Head of caudate nucleus (tissue), 42 donors: ENCODE measurements at regions of chr12 and their contacts with region 1.

Region 1: GRCh38 chr12:108562348-108563135 is at the start of gene ISCU:
- DNase-seq: peak; percentile 91 to 100 (median 98)

Region 2: GRCh38 chr12:108514973-108515814 is 47.3 kb before region 1 on chr12 and contains the start of gene FICD:
- intact Hi-C with region 1: loop called (anchors 5 kb)
- DNase-seq: peak; percentile 100

Region 3: DNA sequence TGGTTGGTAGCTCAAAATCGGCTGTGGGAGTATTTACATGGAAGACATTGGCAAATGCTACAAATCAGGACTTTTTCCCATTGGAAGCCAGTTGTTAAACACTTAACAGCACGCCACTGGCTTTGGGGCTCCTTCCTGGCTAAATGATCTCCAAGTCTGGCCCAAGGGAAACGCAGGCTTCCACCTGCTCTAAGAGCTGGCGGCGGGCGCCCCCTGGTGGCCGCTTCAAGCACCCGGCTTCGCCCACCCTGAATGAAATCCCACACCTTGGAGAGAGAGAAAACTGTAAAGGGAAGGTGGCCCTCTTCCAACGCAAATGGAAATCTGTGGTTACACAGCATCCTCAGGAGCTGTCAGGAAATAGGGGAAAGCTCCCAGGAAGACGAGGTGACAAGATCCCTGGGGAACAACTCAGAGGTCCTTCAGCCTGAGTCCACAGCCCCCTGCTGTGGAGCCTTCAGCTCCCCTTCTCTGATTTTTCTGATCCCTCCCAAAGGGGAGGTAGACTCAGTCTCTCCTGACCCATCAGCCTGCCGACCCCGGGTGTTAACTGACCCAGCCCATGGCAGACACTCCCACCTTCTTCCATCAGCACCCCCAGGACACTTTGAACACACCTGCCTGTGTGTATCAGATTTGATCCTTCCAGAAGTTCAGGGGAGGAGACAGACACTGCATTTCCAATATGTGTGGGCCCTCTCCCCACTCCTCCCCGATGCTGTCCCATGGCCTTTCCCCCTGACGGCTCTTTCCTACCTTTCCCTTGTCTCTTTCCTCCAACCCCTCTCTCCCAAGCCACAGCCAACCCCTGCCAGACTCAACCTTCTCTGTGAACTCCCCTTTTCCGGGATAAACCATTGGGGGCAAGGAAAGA is 55.8 kb after region 1 on chr12:
- intact Hi-C with region 1: loop called (anchors 2 kb)
- DNase-seq: peak; percentile 63 to 92 (median 84)

Region 4: DNA sequence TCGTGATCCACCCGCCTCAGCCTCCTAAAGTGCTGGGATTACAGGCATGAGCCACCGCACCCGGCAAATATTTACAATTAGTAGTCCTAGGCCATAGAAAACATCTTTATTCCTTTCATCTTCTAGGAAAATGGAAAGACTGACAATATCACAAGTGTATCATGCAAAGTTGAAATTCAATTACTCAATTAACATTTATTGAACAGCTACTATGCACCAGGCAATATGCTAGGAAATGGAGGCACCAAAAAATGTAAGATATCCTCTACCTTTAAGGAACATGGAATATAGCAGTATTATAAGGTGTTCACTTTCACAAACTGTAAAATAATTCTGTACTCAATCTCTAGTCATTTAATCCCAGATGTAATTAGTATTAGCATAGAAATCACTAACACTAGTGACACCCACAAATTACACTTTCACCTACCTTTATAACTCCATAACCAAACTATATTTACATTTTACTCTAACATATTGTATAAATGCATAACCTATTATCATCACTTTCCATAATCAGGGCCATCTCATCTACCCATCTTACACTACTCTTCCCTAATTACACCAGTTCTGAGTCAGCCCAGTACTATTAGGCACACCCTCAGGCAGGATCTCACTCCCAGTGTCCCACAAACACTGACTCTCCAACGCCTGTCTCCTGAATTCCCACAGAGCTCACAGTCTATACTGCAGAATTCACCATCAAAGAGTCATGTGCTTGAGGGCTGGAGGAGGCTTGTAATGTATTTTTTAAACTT is 158.4 kb after region 1 on chr12:
- intact Hi-C with region 1: no loop called
- DNase-seq: no peak

Region 5: GRCh38 chr12:108731105-108731865 is 168.7 kb after region 1 on chr12 and contains the start of gene CORO1C:
- intact Hi-C with region 1: loop called (anchors 5 kb)
- DNase-seq: peak; percentile 80 to 97 (median 93)

Region 6: GRCh38 chr12:108803428-108804105 is 241.0 kb after region 1 on chr12:
- intact Hi-C with region 1: loop called (anchors 10 kb)
- DNase-seq: peak; percentile 26 to 94 (median 82)

Region 7: GRCh38 chr12:109093022-109093918 is 530.7 kb after region 1 on chr12 and contains the start of gene ALKBH2:
- intact Hi-C with region 1: loop called (anchors 5 kb)
- DNase-seq: peak; percentile 85 to 98 (median 95)